GM13977 (cell line): ENCODE measurements at regions of chr22 and their contacts with region 1.

Region 1: DNA sequence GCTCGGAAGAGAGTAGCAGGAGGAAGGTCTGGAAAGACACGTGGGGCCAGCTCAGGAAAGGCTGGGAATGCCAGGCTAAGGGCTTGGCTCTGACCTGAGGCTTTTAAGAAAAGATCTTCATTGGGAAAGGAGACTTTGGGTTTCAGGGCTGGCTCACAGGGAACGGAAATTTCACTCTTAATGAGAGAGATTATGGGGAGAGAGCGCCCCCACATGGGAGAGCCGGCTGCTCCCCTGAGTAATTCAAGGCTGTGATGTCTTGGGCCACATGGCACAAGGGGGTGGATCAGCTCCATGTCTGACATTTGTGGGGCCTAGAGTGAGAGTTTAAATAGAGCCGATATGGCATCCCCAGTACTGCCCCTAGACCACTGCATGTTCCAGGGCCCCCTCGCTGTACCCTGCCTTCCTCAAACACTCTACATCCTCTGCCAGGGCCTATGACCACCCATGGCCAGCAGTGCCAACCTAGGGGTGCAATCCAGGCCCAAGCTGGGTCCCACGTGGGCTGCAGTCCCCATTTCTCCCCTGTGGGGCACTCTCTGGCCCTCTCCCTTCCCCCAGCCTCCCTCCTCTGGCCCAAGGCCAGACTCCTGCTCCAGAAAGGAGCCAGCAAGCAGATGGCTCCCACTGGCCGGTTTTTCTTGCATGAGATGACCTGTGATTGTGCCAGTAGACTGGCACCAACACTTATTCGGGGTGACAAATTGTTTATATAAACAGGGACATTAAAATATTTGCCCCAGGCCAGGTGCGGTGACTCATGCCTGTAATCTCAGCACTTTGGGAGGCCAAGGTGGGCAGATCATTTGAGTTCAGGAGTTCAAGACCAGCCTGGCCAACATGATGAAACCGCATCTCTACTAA is 75.2 kb downstream of the ISX start:
- DNase-seq: peak; percentile 72
- CTCF ChIP-seq: peak; percentile 65

Region 2: GRCh38 chr22:33302049-33302545 is 1839.0 kb before region 1 on chr22:
- in situ Hi-C with region 1: loop called (anchors 25 kb)
- DNase-seq: peak; percentile 71
- CTCF ChIP-seq: peak; percentile 99

Region 3: DNA sequence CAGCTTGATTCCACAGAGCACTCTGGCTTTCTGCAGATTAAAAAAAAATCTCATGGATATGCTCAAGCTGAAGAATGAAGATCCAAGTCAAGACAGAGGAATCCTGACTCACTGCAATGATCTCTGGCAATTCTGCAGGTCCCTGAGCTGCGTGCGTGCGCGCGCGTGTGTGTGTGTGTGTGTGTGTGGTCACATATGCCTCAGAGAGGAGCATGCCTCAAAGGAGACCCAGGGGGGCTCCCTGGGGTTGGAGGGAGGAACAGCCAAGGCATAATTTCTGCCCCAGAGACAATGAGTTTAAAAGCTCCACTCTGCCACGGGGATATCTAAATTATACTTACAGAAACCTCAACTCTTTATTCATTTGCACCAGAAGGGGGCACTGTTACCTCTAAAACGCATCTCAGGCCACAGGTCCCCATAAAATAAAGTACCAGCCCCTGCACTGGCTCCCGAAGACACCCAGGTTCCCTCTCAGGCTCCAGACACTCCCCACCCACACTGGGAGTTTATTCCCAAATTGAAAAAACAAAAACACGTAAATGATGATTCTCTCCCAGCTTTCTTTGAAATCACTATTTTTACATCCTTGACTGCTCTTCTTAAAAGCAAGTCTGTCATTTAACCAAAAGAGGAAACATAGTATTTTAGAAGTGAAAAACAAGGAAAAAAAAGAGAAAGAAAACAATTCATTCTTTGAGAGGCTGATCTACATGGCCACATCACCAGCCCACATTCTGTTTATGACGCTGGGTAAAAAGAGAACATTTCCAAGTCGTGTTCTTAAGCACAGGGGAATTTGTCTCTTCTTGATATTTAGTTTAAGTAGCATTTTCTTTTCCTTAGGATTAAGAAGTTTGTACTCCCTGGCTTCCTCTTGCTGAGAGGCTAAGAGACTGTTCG is 1621.8 kb before region 1 on chr22:
- in situ Hi-C with region 1: loop called (anchors 25 kb)
- DNase-seq: peak; percentile 65
- CTCF ChIP-seq: peak; percentile 61

Region 4: GRCh38 chr22:35043252-35043931 is 97.7 kb before region 1 on chr22:
- in situ Hi-C with region 1: loop called (anchors 10 kb)
- DNase-seq: peak; percentile 24
- CTCF ChIP-seq: peak; percentile 62